IMR-90 (cell line): ENCODE measurements at regions of chr22 and their contacts with region 1.

Region 1: GRCh38 chr22:17359501-17359900 is 9.8 kb upstream of the CECR2 start:
- DNase-seq: no peak
- ATAC-seq: no peak
- H3K4me3 ChIP-seq: no peak overlapping the region
- H3K27ac ChIP-seq: no peak overlapping the region
- H3K4me1 ChIP-seq: no peaks in the 10 kb centered on the region
- H3K27me3 ChIP-seq: no peaks in the 10 kb centered on the region
- CTCF ChIP-seq: no peak
- POLR2A ChIP-seq: no peak
- RAD21 ChIP-seq: no peak

Region 2: GRCh38 chr22:17087498-17088131 is 271.9 kb before region 1 on chr22:
- CTCF ChIA-PET with region 1: no interaction called
- POLR2A ChIA-PET with region 1: no interaction called
- dilution Hi-C with region 1: no loop called
- in situ Hi-C with region 1: no loop called
- intact Hi-C with region 1: no loop called
- DNase-seq: peak; percentile 91
- ATAC-seq: no peak; the same call in 1 of the 2 replicates
- H3K4me3 ChIP-seq: no peak overlapping the region
- H3K27ac ChIP-seq: no peak overlapping the region
- H3K4me1 ChIP-seq: peaks cover 12% of the 10 kb centered on the region
- H3K27me3 ChIP-seq: no peaks in the 10 kb centered on the region
- CTCF ChIP-seq: no peak
- POLR2A ChIP-seq: no peak
- RAD21 ChIP-seq: no peak

Region 3: GRCh38 chr22:17158568-17159503 is 200.7 kb before region 1 on chr22 and contains the start of gene HDHD5:
- CTCF ChIA-PET with region 1: no interaction called
- POLR2A ChIA-PET with region 1: no interaction called
- dilution Hi-C with region 1: no loop called
- in situ Hi-C with region 1: no loop called
- intact Hi-C with region 1: no loop called
- DNase-seq: peak; percentile 82
- ATAC-seq: peak; percentile 90
- H3K4me3 ChIP-seq: peak within 1 kb of the TSS; percentile 61
- H3K27ac ChIP-seq: peak within 1 kb of the TSS; percentile 85
- H3K4me1 ChIP-seq: peaks cover 4% of the 10 kb centered on the region; the same call in 1 of the 2 replicates
- H3K27me3 ChIP-seq: no peaks in the 10 kb centered on the region
- CTCF ChIP-seq: no peak
- POLR2A ChIP-seq: no peak
- RAD21 ChIP-seq: no peak
- total RNA-seq, gene HDHD5: 31.4 and 31.9 TPM in 2 replicates

Region 4: GRCh38 chr22:17411213-17411612 is 51.7 kb after region 1 on chr22:
- CTCF ChIA-PET with region 1: no interaction called
- POLR2A ChIA-PET with region 1: no interaction called
- dilution Hi-C with region 1: no loop called
- in situ Hi-C with region 1: loop called (anchors 10 kb)
- intact Hi-C with region 1: no loop called
- DNase-seq: no peak
- ATAC-seq: no peak
- H3K4me3 ChIP-seq: no peak overlapping the region
- H3K27ac ChIP-seq: no peak overlapping the region
- H3K4me1 ChIP-seq: no peaks in the 10 kb centered on the region
- H3K27me3 ChIP-seq: no peaks in the 10 kb centered on the region
- CTCF ChIP-seq: no peak
- POLR2A ChIP-seq: no peak
- RAD21 ChIP-seq: no peak